Activated CD8-positive, alpha-beta T cell treated with anti-CD3 and anti-CD28 coated beads, Interleukin-2, amount 10 ng/mL, durations not matched to agents 7 days and 5 days (primary cell): ENCODE measurements at regions of chr1 and their contacts with region 1.

Region 1: GRCh38 chr1:225923692-225924555 is at the start of gene PYCR2:
- DNase-seq: peak; percentile 96
- ATAC-seq: peak; percentile 98
- H3K4me3 Mint-ChIP-seq: peak within 1 kb of the TSS; percentile 97
- H3K27ac Mint-ChIP-seq: peak within 1 kb of the TSS; percentile 97
- H3K4me1 Mint-ChIP-seq: peaks cover 65% of the 10 kb centered on the region
- H3K27me3 Mint-ChIP-seq: no peaks in the 10 kb centered on the region
- total RNA-seq, gene PYCR2: 122 to 126 TPM

Region 2: DNA sequence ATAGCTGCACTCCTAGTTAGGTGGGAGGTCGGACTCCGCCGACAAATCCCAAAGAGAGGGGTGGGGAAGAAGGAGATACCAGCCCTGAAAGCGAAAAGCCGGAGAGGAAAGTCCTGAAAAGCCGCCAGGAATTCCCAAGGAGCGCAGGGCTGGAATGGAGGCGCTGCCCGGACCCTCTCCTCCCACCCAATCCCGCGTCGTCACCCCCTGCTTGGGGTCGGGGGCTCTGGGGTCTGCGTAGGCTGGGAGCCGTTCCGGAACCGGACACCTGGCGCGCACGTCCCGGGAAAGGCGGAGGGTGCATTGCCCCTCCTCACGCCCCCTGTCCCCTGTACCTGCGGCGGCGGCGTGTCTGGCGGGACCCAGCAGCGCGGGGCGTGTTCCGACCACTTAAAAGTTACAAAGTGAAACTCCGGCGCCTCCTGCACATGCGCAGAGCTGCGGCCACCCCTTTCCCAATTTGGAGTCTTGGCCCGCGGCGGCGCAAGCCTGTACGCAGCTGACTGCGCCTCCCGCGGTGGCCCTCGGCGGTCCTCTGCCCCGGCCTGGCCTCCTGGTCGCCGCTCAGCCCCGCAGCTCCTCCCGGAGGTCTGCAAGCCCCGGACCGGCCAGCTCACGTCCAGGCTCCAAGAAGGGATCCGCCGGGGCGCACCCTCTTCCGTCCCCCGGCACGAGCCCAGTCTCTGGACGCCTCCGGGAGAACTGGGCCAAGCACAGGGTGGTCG is 41.8 kb before region 1 on chr1 and contains the start of gene TMEM63A:
- CTCF ChIA-PET with region 1: interaction called, 5 read pairs
- POLR2A ChIA-PET with region 1: interaction called, 13 read pairs
- DNase-seq: peak; percentile 93
- ATAC-seq: peak; percentile 83
- H3K4me3 Mint-ChIP-seq: peak within 1 kb of the TSS; percentile 87
- H3K27ac Mint-ChIP-seq: peak within 1 kb of the TSS; percentile 92
- H3K4me1 Mint-ChIP-seq: peaks cover 56% of the 10 kb centered on the region
- H3K27me3 Mint-ChIP-seq: peaks cover 8% of the 10 kb centered on the region
- total RNA-seq, gene TMEM63A: 83.5 to 85.8 TPM

Region 3: GRCh38 chr1:225937048-225937968 is 13.4 kb after region 1 on chr1:
- CTCF ChIA-PET with region 1: no interaction called
- POLR2A ChIA-PET with region 1: interaction called, 10 read pairs
- DNase-seq: no peak
- ATAC-seq: no peak
- H3K4me3 Mint-ChIP-seq: no peak overlapping the region
- H3K27ac Mint-ChIP-seq: no peak overlapping the region
- H3K4me1 Mint-ChIP-seq: no peaks in the 10 kb centered on the region
- H3K27me3 Mint-ChIP-seq: peaks cover 5% of the 10 kb centered on the region

Region 4: GRCh38 chr1:226051356-226051755 is 127.4 kb after region 1 on chr1:
- CTCF ChIA-PET with region 1: no interaction called
- POLR2A ChIA-PET with region 1: no interaction called
- DNase-seq: no peak
- ATAC-seq: no peak
- H3K4me3 Mint-ChIP-seq: no peak overlapping the region
- H3K27ac Mint-ChIP-seq: no peak overlapping the region
- H3K4me1 Mint-ChIP-seq: no peaks in the 10 kb centered on the region
- H3K27me3 Mint-ChIP-seq: peaks cover 2% of the 10 kb centered on the region